ENCODE measurements at regions of chr2 and their contacts with region 1.

Region 1: DNA sequence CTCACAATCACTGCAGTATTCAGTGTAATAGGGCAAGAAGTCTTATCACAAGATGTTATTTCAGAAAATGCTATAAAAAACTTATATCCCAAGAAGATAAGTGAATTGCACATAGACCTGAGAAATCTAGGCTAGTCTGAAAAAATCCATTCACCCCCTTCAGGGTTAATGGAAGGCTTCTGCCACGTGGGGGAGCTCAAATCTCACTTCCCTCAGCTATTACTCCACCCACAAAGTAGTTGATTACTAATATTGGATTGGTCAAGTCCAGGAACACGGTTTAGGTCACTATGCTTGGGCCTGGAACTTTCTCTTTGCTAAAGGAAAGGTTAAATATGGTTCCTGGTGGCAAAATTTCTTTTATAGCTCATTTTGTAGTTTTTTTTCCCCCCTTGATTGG is 51.2 kb upstream of the ADAM23 start:
- DNase-seq: peak; percentile 62
- ATAC-seq: peak; percentile 98
- H3K4me3 ChIP-seq: no peak overlapping the region
- H3K27ac ChIP-seq: no peak overlapping the region
- H3K4me1 ChIP-seq: no peaks in the 10 kb centered on the region
- H3K27me3 ChIP-seq: no peaks in the 10 kb centered on the region
- CTCF ChIP-seq: peak; percentile 75
- EP300 ChIP-seq: no peak
- POLR2A ChIP-seq: no peak
- RAD21 ChIP-seq: peak; percentile 70

Region 2: GRCh38 chr2:206408323-206409320 is 16.5 kb after region 1 on chr2:
- CTCF ChIA-PET with region 1: no interaction called
- POLR2A ChIA-PET with region 1: no interaction called
- in situ Hi-C with region 1: no loop called
- intact Hi-C with region 1: no loop called
- DNase-seq: no peak
- ATAC-seq: no peak
- H3K4me3 ChIP-seq: no peak overlapping the region
- H3K27ac ChIP-seq: no peak overlapping the region
- H3K4me1 ChIP-seq: no peaks in the 10 kb centered on the region
- H3K27me3 ChIP-seq: no peaks in the 10 kb centered on the region; a peak in 1 of 5 replicates
- CTCF ChIP-seq: no peak
- EP300 ChIP-seq: no peak
- POLR2A ChIP-seq: no peak
- RAD21 ChIP-seq: no peak

Region 3: GRCh38 chr2:206423149-206423548 is 31.0 kb after region 1 on chr2:
- CTCF ChIA-PET with region 1: no interaction called
- POLR2A ChIA-PET with region 1: no interaction called
- in situ Hi-C with region 1: no loop called
- intact Hi-C with region 1: no loop called
- DNase-seq: no peak
- ATAC-seq: no peak; the same call in 2 of the 3 replicates
- H3K4me3 ChIP-seq: no peak overlapping the region
- H3K27ac ChIP-seq: no peak overlapping the region
- H3K4me1 ChIP-seq: no peaks in the 10 kb centered on the region
- H3K27me3 ChIP-seq: no peaks in the 10 kb centered on the region
- CTCF ChIP-seq: no peak
- EP300 ChIP-seq: no peak
- POLR2A ChIP-seq: no peak
- RAD21 ChIP-seq: no peak

Region 4: GRCh38 chr2:206442833-206443734 is 51.0 kb after region 1 on chr2 and contains the start of gene ADAM23:
- CTCF ChIA-PET with region 1: no interaction called
- POLR2A ChIA-PET with region 1: no interaction called
- in situ Hi-C with region 1: no loop called
- intact Hi-C with region 1: loop called (anchors 2 kb)
- DNase-seq: no peak
- ATAC-seq: peak; percentile 49
- H3K4me3 ChIP-seq: peak within 1 kb of the TSS; percentile 45 to 69 (median 47); a peak in 4 of 6 replicates
- H3K27ac ChIP-seq: no peak within 1 kb of the TSS
- H3K4me1 ChIP-seq: peaks cover 5% of the 10 kb centered on the region; the same call in 1 of the 2 replicates
- H3K27me3 ChIP-seq: peaks cover 2 to 45% of the 10 kb centered on the region in 2 experiments
- CTCF ChIP-seq: no peak
- EP300 ChIP-seq: no peak
- POLR2A ChIP-seq: no peak
- RAD21 ChIP-seq: no peak
- total RNA-seq, gene ADAM23: 0.04 TPM in 1 of 2 replicates, not detected in the other

Region 5: GRCh38 chr2:206556357-206556949 is 164.3 kb after region 1 on chr2:
- CTCF ChIA-PET with region 1: interaction called, 5 read pairs
- POLR2A ChIA-PET with region 1: no interaction called
- in situ Hi-C with region 1: loop called (anchors 10 kb)
- intact Hi-C with region 1: loop called (anchors 1 kb)
- DNase-seq: peak; percentile 25
- ATAC-seq: peak; percentile 67
- H3K4me3 ChIP-seq: no peak overlapping the region
- H3K27ac ChIP-seq: no peak overlapping the region
- H3K4me1 ChIP-seq: no peaks in the 10 kb centered on the region
- H3K27me3 ChIP-seq: no peaks in the 10 kb centered on the region
- CTCF ChIP-seq: peak; percentile 58
- EP300 ChIP-seq: no peak
- POLR2A ChIP-seq: no peak
- RAD21 ChIP-seq: no peak

Region 6: DNA sequence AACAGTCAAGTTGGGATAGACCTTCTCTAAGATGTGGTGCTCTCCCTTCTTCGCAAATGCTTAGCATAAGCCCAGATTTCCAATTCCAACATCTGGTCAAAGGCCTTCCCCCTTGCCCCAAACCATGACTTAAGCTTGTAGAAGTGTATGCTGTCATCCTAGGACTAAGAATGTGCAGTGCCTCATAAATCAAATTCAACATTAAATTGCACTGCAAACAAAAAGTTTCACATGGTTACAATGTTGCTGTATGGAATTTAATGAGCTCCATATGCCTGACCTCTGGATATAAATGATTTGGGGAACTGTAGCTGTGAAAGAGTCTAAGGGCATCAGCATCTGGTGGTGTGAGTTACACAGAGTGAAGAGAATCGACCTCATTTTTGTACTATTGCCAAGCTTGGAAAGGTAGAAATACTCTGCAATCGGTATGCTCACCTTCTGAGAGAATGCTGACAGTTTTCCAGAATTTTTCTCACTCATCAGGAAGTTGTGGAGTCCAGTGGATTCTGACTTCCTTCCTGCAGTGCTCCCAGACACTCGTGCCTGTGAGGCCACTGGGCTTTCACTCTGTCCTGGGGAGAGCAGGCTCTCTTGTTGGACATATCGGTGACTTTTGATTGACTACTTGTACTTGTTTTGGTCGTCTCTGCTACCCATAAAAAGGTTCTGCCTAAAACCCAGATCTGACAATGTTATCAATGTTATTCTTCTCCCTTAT is 413.9 kb after region 1 on chr2:
- CTCF ChIA-PET with region 1: no interaction called
- POLR2A ChIA-PET with region 1: no interaction called
- in situ Hi-C with region 1: no loop called
- intact Hi-C with region 1: no loop called
- DNase-seq: no peak
- ATAC-seq: no peak; the same call in 1 of the 3 replicates
- H3K4me3 ChIP-seq: no peak overlapping the region
- H3K27ac ChIP-seq: no peak overlapping the region
- H3K4me1 ChIP-seq: no peaks in the 10 kb centered on the region
- H3K27me3 ChIP-seq: no peaks in the 10 kb centered on the region
- CTCF ChIP-seq: no peak
- EP300 ChIP-seq: no peak
- POLR2A ChIP-seq: no peak
- RAD21 ChIP-seq: no peak

Measured in HepG2 (cell line).